ENCODE measurements at regions of chr5 and their contacts with region 1.

Region 1: GRCh38 chr5:111680737-111681413 is 76.1 kb downstream of the NREP start:
- DNase-seq: peak; percentile 0 to 66
- H3K4me3 ChIP-seq: no peak overlapping the region
- H3K27ac ChIP-seq: peak overlapping the region; percentile 12; the same call in 1 of the 2 replicates
- H3K4me1 ChIP-seq: peaks cover 19% of the 10 kb centered on the region
- H3K27me3 ChIP-seq: no peaks in the 10 kb centered on the region
- CTCF ChIP-seq: no peak

Region 2: DNA sequence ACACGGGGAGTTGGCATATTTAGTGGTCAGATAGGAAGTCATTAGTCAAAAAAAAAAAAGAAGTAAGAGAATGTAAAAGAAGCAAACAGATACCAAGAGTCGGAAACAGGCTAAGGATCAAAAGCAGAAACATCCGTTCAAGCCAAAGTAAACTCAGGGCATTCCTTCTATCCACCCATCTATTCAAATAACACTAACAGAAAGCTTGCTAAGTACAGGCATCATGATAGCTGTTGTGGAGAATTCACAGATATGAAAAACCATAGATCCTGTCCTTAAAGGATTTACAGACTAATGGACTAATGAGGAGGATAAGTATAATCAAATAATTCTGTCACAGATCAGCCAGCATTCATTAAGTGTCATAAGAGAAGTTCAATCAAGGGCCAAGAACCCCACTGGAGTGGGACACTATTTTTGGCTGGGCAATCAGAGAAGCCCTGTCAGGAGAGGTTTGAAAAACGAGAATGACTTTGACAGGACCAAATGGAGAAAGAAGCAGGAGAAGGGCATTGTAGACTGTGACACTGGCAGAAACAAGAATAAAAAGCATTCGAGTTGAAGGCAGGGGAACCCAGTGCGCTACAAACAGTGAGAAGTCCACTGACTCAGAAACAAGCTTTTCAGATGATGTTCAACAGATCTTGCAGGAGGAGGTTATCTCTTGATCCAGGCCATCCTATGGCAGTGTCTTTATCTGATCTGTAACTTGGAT is 763.6 kb before region 1 on chr5:
- CTCF ChIA-PET with region 1: no interaction called
- POLR2A ChIA-PET with region 1: no interaction called
- intact Hi-C with region 1: no loop called
- DNase-seq: no peak
- H3K4me3 ChIP-seq: no peak overlapping the region
- H3K27ac ChIP-seq: no peak overlapping the region
- H3K4me1 ChIP-seq: peaks cover 27% of the 10 kb centered on the region
- H3K27me3 ChIP-seq: no peaks in the 10 kb centered on the region
- CTCF ChIP-seq: no peak

Region 3: GRCh38 chr5:111530298-111530740 is 150.6 kb before region 1 on chr5:
- CTCF ChIA-PET with region 1: no interaction called
- POLR2A ChIA-PET with region 1: no interaction called
- intact Hi-C with region 1: no loop called
- DNase-seq: no peak
- H3K4me3 ChIP-seq: no peak overlapping the region
- H3K27ac ChIP-seq: no peak overlapping the region
- H3K4me1 ChIP-seq: no peaks in the 10 kb centered on the region
- H3K27me3 ChIP-seq: no peaks in the 10 kb centered on the region
- CTCF ChIP-seq: no peak

Region 4: GRCh38 chr5:111645303-111645838 is 35.5 kb before region 1 on chr5:
- CTCF ChIA-PET with region 1: no interaction called
- POLR2A ChIA-PET with region 1: no interaction called
- intact Hi-C with region 1: loop called (anchors 5 kb)
- DNase-seq: no peak
- H3K4me3 ChIP-seq: no peak overlapping the region
- H3K27ac ChIP-seq: no peak overlapping the region
- H3K4me1 ChIP-seq: no peaks in the 10 kb centered on the region
- H3K27me3 ChIP-seq: no peaks in the 10 kb centered on the region
- CTCF ChIP-seq: no peak

Region 5: DNA sequence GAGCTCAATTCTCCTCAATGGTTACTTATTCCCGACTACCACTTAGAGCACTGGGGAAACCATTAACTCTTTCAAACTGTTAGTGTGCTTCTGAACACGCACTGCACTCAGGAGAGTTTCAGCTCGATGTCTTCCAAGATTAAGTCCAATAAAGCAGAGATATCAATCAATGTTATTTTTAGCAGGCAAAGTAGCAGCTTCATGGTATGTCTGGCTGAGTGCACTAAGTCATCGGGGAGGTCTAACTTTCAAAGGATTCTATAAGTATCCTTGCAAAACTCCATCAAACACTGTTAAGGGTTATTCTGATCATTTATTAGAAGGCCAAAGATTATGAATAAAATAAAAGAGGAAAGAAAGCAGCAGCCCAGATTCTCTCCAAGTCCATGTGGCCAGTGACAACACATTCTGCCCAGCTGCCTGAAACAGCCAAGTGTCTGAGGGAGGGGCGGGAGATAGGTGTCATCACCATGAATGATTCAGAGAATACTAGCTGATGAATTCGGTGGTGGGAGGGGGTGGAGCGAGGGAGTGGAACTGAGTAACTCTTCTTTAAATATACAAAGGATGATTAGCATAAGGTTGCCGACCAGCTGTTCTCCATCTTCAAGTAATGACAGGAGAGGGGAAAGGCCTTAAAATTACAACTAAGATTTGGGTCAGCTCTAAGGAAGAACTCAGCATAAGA is 54.9 kb after region 1 on chr5:
- CTCF ChIA-PET with region 1: no interaction called
- POLR2A ChIA-PET with region 1: no interaction called
- intact Hi-C with region 1: no loop called
- DNase-seq: no peak
- H3K4me3 ChIP-seq: no peak overlapping the region
- H3K27ac ChIP-seq: no peak overlapping the region
- H3K4me1 ChIP-seq: no peaks in the 10 kb centered on the region
- H3K27me3 ChIP-seq: no peaks in the 10 kb centered on the region
- CTCF ChIP-seq: no peak